ENCODE measurements at regions of chr16 and their contacts with region 1.

Region 1: GRCh38 chr16:57734925-57735754 is 430 bp upstream of the KATNB1 start:
- DNase-seq: peak; percentile 94 to 99 (median 98)
- ATAC-seq: peak; percentile 88
- H3K4me3 Mint-ChIP-seq: peak overlapping the region; percentile 92 to 100 (median 96)
- H3K27ac Mint-ChIP-seq: peak overlapping the region; percentile 92 to 99 (median 96)
- H3K4me1 Mint-ChIP-seq: peaks cover 11 to 44% (median 31%) of the 10 kb centered on the region in 4 donors
- H3K27me3 Mint-ChIP-seq: peaks cover 0 to 2% (median 0%) of the 10 kb centered on the region in 5 donors

Region 2: DNA sequence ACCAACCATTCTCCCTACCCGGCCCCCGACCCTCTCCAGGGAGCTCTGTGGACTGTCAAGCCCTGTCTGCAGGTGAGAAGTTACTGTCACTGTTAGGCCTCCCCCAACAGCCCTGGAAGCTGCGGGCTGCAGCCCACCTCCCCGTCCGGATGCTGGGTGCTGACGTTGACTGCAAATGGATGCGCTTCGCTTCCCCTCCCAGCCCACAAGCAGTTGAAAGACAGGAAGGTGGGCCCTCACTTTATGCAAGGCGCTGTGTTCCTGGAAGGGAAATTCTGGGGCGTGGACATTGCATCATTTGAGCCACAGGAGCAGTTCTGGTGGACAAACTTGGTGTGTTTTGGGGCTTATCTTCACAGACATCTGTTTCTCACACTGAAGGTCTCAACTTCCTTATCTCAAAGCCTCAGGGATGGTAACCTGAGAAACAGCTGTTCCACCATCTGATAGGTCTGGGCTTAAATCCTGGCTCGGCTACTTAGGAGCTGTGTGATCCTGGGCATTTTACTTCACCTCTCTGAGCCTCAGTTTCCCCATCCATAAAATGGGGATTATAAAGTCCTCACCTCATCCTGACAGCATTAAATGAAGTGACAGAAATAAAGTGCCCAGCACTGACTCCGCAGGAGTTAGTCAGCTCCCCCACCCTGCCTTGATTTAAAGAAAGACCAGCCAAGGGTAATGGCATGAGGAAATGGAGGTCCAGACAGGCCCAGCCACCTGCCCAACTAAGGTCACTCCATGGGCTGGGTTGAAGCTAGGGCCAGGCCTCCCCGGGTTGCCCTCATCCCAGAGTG is 45.2 kb before region 1 on chr16:
- POLR2A ChIA-PET with region 1: interaction called, 17 read pairs
- DNase-seq: peak; percentile 37 to 82 (median 70)
- ATAC-seq: peak; percentile 95 to 96
- H3K4me3 Mint-ChIP-seq: peak overlapping the region; percentile 50 to 83 (median 73)
- H3K27ac Mint-ChIP-seq: peak overlapping the region; percentile 89 to 98 (median 96)
- H3K4me1 Mint-ChIP-seq: peaks cover 18 to 35% (median 32%) of the 10 kb centered on the region in 4 donors
- H3K27me3 Mint-ChIP-seq: peaks cover 0 to 1% (median 0%) of the 10 kb centered on the region in 5 donors

Region 3: DNA sequence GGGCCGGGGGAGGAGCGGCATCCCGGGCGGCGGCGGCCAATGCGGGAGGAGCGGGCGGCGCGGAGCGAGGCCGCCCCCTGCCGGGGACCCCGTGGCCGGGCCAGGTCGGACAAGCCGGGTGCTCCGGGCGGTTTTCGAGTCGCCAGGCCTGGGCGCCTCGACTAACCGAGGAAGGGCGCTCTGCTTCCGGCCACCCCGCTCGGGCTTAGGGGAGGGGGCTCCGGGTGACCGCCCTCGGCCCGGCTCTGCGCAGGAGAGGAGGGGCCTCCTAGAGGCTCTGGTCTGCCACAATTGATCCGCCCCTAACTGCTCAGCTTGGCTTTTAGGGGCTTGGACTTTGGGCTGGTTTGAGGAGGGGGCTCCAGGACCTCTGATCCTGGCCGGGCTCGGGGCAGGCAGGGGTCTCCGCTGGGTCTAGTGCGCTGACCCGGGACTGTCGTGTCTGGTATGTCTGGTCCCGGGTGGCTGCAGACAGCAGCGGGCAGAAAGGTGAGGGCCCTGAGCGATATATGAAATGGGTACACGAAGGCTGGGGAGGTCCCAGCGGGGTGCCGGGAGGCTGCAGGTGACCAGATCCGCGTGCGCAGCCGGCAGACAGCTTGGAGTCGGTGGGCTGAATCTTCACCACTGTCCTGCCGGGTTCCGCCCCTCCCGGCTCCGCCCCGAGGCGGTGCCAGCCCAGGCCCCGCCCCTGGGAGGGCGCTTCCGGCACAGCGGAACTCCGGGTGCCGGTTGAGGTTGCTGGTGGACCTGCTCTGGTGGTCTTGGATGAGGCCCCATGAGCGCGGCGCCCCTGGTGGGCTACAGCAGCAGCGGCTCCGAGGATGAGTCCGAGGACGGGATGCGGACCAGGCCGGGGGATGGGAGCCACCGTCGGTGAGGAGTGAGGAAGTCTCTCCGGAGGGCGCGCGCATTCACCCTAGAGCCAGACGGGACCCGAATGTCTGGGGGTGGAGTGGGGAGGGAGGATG is 265.9 kb after region 1 on chr16 and contains the start of gene USB1:
- POLR2A ChIA-PET with region 1: interaction called, 12 read pairs
- DNase-seq: peak; percentile 73 to 90 (median 88)
- ATAC-seq: peak; percentile 75 to 76
- H3K4me3 Mint-ChIP-seq: peak within 1 kb of the TSS; percentile 88 to 96 (median 91)
- H3K27ac Mint-ChIP-seq: peak within 1 kb of the TSS; percentile 79 to 97 (median 91)
- H3K4me1 Mint-ChIP-seq: peaks cover 26 to 67% (median 63%) of the 10 kb centered on the region in 4 donors
- H3K27me3 Mint-ChIP-seq: no peaks in the 10 kb centered on the region
- polyA plus RNA-seq, gene USB1: 31.1 to 36.4 (median 32.8) TPM

Measured in naive thymus-derived CD8-positive, alpha-beta T cell (primary cell).